Activated CD8-positive, alpha-beta T cell treated with anti-CD3 and anti-CD28 coated beads for 36 hours (primary cell): ENCODE measurements at regions of chr1 and their contacts with region 1.

Region 1: DNA sequence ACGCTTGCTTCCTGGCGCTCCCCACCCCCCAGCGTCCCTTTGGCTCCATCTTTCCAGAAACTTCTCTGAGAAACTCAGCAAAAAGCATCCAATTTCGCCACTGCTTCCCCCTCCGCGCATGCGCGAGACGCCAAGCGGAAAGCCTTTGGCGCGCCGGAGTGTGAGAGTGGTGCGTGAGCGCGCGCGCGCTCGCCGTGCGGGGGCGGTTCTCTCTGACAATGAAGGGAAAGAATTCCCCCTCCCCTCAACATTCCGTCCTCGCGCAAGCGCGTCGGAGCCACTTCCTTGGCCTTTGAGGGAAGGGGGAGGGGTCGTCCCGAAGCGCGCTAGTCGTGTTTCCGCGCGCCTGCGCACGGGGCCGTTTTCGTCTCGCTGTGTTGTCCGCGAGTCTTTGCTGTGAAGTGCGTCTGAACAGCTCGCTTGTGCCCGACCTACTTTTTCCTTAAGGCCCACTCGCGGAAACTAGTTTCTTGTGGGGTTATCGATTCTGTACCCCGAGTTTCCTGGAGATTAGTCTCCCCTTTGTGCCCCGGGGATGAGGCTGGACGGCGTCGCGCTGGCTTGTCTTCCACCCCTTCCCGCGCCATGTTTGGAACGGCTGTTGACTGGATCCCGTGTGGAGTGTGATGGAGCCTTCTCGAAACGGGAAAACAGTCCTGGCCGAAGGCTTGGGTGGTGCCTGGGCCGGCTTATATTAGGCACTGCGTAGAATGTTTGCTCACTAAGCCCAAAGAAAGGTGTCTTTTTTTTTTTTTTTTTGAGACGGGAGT is 11.6 kb upstream of the SPEN start:
- DNase-seq: peak; percentile 100
- ATAC-seq: peak; percentile 59
- H3K4me3 Mint-ChIP-seq: peak overlapping the region; percentile 94
- H3K27ac Mint-ChIP-seq: peak overlapping the region; percentile 96
- H3K4me1 Mint-ChIP-seq: peaks cover 28% of the 10 kb centered on the region
- H3K27me3 Mint-ChIP-seq: no peaks in the 10 kb centered on the region
- CTCF ChIP-seq: no peak

Region 2: DNA sequence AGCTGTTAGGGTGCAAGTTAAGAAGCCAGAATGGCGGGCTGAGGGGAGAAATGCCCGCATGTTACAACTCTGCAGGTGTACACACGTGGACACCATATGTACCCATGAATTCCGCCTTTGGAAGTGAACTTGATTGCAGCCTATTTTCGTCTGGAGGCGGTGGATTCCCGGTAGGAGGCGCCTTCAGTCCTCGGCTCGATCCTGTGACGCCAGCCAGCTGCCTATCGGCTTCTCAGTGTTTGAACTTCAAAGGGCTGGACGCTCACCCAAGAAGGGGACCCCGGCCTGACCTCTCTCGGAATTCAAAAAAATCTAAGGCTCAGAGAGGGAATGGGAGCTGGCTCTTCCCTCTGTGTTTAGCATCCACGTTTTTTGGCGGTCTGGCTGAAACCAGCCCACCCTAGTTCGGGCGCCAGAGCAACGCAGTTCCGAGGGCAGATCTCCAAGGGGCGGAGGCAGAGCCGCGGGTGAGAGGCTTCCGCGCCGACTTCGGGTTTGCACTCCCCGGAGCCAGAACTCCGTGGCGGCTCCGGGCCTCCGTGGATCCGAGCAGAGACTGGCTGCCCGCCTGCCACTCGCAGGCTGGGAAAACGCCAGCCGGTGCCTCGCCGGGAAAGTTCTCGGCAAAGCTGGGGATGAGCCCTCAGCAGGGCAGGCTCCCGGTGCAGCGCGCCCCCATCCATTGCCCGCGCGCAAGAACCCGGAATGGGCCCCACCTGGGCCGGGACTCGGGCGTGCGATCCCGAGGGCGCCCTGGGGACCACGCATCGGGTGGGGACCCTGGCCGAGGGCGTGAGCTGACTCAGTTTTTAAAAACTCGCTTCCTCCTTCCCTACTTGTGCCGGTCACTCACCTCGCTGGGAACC is 683.4 kb before region 1 on chr1:
- CTCF ChIA-PET with region 1: no interaction called
- POLR2A ChIA-PET with region 1: no interaction called
- intact Hi-C with region 1: no loop called
- DNase-seq: peak; percentile 43
- ATAC-seq: no peak
- H3K4me3 Mint-ChIP-seq: peak overlapping the region; percentile 24
- H3K27ac Mint-ChIP-seq: no peak overlapping the region
- H3K4me1 Mint-ChIP-seq: peaks cover 23% of the 10 kb centered on the region
- H3K27me3 Mint-ChIP-seq: peaks cover 53% of the 10 kb centered on the region
- CTCF ChIP-seq: no peak

Region 3: DNA sequence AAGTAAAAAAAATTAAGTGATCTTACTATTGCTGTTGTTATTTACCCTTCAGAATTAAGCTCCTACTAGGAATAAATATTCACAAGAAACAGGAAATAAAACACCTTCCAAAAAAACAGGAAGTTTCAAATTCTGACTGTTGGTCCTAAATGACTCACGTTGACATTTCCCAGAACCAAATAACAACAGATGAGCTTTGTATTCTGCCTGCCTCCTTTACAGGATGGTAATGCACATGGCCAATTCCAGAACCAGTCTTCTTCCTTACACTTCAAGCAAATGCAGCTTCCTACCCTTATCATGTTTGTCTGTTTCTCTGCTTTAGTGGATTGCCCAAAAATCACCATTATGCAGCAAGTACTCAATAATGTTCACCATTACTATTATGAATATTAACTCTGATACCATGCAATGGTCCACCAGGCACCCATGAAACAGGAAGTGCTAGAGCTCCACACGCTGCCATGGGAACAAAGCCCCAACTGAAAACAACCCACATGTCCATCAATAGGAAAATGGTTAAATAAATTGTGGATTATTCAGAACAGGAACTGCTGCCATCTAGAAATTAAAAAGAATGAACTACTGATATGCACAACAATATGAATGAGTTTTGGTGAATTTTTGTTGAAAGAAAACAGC is 320.8 kb before region 1 on chr1:
- CTCF ChIA-PET with region 1: no interaction called
- POLR2A ChIA-PET with region 1: no interaction called
- intact Hi-C with region 1: no loop called
- DNase-seq: no peak
- ATAC-seq: peak; percentile 51
- H3K4me3 Mint-ChIP-seq: no peak overlapping the region
- H3K27ac Mint-ChIP-seq: peak overlapping the region; percentile 74
- H3K4me1 Mint-ChIP-seq: peaks cover 29% of the 10 kb centered on the region
- H3K27me3 Mint-ChIP-seq: no peaks in the 10 kb centered on the region
- CTCF ChIP-seq: no peak

Region 4: GRCh38 chr1:15820478-15820877 is 15.4 kb before region 1 on chr1:
- CTCF ChIA-PET with region 1: interaction called, 28 read pairs
- POLR2A ChIA-PET with region 1: interaction called, 12 read pairs
- intact Hi-C with region 1: no loop called
- DNase-seq: no peak
- ATAC-seq: no peak
- H3K4me3 Mint-ChIP-seq: no peak overlapping the region
- H3K27ac Mint-ChIP-seq: no peak overlapping the region
- H3K4me1 Mint-ChIP-seq: peaks cover 10% of the 10 kb centered on the region
- H3K27me3 Mint-ChIP-seq: no peaks in the 10 kb centered on the region
- CTCF ChIP-seq: no peak

Region 5: GRCh38 chr1:15825800-15826199 is 10.1 kb before region 1 on chr1:
- CTCF ChIA-PET with region 1: interaction called, 16 read pairs
- POLR2A ChIA-PET with region 1: interaction called, 12 read pairs
- intact Hi-C with region 1: no loop called
- DNase-seq: no peak
- ATAC-seq: no peak
- H3K4me3 Mint-ChIP-seq: no peak overlapping the region
- H3K27ac Mint-ChIP-seq: no peak overlapping the region
- H3K4me1 Mint-ChIP-seq: peaks cover 6% of the 10 kb centered on the region
- H3K27me3 Mint-ChIP-seq: no peaks in the 10 kb centered on the region
- CTCF ChIP-seq: no peak

Region 6: DNA sequence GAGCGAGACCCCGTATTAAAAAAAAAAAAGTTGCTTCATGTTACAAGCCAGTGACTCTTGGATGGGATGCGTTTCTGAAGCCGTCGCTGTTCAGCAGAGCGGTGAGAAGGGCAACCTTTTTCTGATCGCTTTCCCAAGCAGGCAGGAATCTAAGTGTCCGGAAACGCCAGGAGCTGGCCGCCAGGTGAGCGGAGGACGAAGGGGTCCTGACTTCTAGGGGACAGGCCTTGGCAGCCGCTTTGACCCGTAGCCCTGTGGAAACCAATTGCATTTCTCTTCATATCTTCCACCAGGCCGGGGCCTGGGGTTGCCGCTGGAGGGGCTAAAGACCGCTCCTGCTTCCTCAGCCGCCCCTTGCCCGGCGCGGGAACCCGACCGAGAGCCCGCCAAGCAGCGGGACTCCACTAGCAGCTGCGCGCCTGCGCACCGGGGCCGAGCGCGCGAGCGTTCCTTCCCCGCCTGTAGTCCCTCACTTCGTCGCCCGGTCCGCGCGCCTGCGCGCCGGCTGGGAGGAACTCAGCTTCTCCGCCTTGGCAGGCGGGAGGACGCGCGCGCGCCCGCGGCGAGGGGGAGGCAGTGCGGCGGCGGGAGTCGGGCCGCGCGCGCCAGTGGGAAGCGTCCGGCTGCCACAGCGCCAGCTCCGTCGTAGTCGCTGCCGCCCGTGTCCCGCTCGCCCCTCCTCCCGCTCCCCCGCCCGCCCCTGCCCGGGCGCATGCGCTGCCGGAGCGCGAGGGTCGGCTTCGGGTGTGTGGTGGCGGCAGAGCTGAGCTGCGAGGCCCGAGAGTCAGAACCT is 11.4 kb after region 1 on chr1 and contains the start of gene SPEN:
- CTCF ChIA-PET with region 1: interaction called, 24 read pairs
- POLR2A ChIA-PET with region 1: interaction called, 85 read pairs
- intact Hi-C with region 1: no loop called
- DNase-seq: peak; percentile 97
- ATAC-seq: peak; percentile 86
- H3K4me3 Mint-ChIP-seq: peak within 1 kb of the TSS; percentile 98
- H3K27ac Mint-ChIP-seq: peak within 1 kb of the TSS; percentile 97
- H3K4me1 Mint-ChIP-seq: peaks cover 38% of the 10 kb centered on the region
- H3K27me3 Mint-ChIP-seq: no peaks in the 10 kb centered on the region
- CTCF ChIP-seq: no peak
- total RNA-seq, gene SPEN: 59.8 to 60.3 TPM

Region 7: GRCh38 chr1:15908597-15908996 is 72.7 kb after region 1 on chr1:
- CTCF ChIA-PET with region 1: no interaction called
- POLR2A ChIA-PET with region 1: no interaction called
- intact Hi-C with region 1: no loop called
- DNase-seq: no peak
- ATAC-seq: no peak
- H3K4me3 Mint-ChIP-seq: no peak overlapping the region
- H3K27ac Mint-ChIP-seq: no peak overlapping the region
- H3K4me1 Mint-ChIP-seq: peaks cover 17% of the 10 kb centered on the region
- H3K27me3 Mint-ChIP-seq: no peaks in the 10 kb centered on the region
- CTCF ChIP-seq: no peak

Region 8: GRCh38 chr1:15918962-15919715 is 83.2 kb after region 1 on chr1:
- CTCF ChIA-PET with region 1: no interaction called
- POLR2A ChIA-PET with region 1: interaction called, 4 read pairs
- intact Hi-C with region 1: loop called (anchors 5 kb)
- DNase-seq: peak; percentile 94
- ATAC-seq: peak; percentile 88
- H3K4me3 Mint-ChIP-seq: peak overlapping the region; percentile 36
- H3K27ac Mint-ChIP-seq: peak overlapping the region; percentile 69
- H3K4me1 Mint-ChIP-seq: peaks cover 58% of the 10 kb centered on the region
- H3K27me3 Mint-ChIP-seq: no peaks in the 10 kb centered on the region
- CTCF ChIP-seq: no peak

Region 9: DNA sequence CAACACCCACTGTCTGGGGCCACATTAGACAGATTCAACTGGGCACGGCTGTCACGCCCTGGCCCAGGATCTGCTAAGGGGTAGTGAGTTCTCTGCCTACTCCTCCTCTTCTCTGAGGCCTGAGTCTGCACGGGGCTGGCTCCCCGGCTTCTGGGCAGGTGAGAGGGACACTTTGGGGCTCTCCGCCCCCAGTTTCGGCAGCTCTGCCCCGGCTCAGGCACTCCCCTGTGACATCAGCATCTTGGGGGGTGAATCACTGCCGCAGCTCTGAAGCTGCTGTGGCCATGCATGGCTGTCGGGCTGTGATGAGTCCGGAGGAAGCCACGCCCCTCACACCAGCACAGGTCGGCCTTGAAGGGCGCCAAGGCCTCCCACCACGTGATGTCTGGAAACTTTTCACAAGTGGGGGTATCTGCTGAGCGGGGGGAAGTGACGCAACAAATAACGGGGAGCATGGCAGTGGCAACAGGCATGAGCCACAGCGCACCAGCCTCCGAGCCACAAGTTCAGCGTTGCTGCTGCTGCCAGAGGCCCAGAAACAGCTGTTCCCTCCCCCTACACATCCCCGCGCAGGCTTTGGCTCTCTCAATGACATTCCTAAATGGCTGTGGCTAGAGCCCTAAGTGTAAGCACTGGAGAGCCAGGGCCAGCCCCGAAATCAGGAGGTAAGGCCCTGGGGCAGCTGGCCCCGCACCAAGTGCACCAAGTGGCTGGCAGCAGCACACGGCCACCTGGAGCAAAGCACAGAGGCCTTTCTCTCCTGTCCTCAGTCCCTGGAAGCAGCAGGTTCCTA is 113.7 kb after region 1 on chr1:
- CTCF ChIA-PET with region 1: no interaction called
- POLR2A ChIA-PET with region 1: interaction called, 16 read pairs
- intact Hi-C with region 1: no loop called
- DNase-seq: peak; percentile 98
- ATAC-seq: peak; percentile 81
- H3K4me3 Mint-ChIP-seq: peak overlapping the region; percentile 62
- H3K27ac Mint-ChIP-seq: peak overlapping the region; percentile 98
- H3K4me1 Mint-ChIP-seq: peaks cover 76% of the 10 kb centered on the region
- H3K27me3 Mint-ChIP-seq: no peaks in the 10 kb centered on the region
- CTCF ChIP-seq: no peak

Region 10: DNA sequence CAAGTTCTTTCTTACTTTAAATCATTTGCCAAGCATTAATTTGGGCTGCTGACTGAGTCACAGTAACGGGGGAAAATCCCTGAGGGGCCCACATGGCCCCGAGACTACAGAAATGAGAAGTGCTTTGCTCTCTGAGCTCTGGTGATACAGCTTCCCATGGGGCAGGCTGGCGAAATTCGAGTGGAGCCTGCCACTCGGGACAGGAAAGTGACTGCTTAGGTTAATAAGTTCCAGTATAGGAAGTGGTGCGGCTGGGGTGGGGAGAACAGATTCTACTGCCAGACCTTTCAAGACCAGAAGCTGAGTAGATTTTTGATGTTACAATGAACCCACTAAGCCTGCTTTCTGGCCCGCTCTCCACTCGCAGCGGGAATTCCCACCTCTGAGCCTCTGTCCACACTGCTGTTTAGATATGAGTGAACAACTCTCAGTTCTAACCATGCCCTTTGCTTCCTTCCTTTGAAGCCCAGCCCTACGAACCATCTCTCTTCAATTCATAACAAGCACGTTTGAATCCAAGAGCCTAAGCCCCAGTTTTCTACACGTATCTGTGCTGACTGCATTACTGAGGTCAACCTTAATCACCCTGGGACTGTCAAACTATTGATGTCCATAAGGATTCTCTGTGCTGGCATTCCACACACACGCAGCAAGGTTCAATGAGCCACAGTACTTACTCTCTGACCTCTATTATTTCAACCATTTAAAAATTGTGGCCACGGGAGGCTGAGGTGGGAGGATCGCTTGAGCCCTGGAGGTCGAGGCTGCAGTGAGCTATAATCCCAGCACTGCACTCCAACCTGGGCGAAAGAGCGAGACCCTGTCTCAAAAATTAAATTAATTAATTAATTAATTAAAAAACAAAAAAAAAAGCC is 130.4 kb after region 1 on chr1:
- CTCF ChIA-PET with region 1: no interaction called
- POLR2A ChIA-PET with region 1: interaction called, 6 read pairs
- intact Hi-C with region 1: loop called (anchors 2 kb)
- DNase-seq: peak; percentile 96
- ATAC-seq: peak; percentile 75
- H3K4me3 Mint-ChIP-seq: peak overlapping the region; percentile 72
- H3K27ac Mint-ChIP-seq: peak overlapping the region; percentile 99
- H3K4me1 Mint-ChIP-seq: peaks cover 86% of the 10 kb centered on the region
- H3K27me3 Mint-ChIP-seq: no peaks in the 10 kb centered on the region
- CTCF ChIP-seq: no peak